T-cell (primary cell): ENCODE measurements at regions of chr13 and their contacts with region 1.

Region 1: GRCh38 chr13:41931337-41931736 is 29.6 kb downstream of the VWA8 start:
- DNase-seq: no peak
- ATAC-seq: no peak
- H3K4me3 ChIP-seq: no peak overlapping the region
- H3K4me3 Mint-ChIP-seq: no peak overlapping the region
- H3K27ac ChIP-seq: no peak overlapping the region
- H3K27ac Mint-ChIP-seq: no peak overlapping the region
- H3K4me1 ChIP-seq: no peaks in the 10 kb centered on the region
- H3K4me1 Mint-ChIP-seq: peaks cover 37 to 40% (median 38%) of the 10 kb centered on the region in 3 donors
- H3K27me3 ChIP-seq: no peaks in the 10 kb centered on the region
- H3K27me3 Mint-ChIP-seq: no peaks in the 10 kb centered on the region

Region 2: GRCh38 chr13:42078128-42078808 is 146.9 kb after region 1 on chr13:
- CTCF ChIA-PET with region 1: no interaction called
- POLR2A ChIA-PET with region 1: interaction called in 1 of 2 experiments, 16 read pairs
- DNase-seq: no peak
- ATAC-seq: no peak
- H3K4me3 ChIP-seq: no peak overlapping the region
- H3K4me3 Mint-ChIP-seq: no peak overlapping the region
- H3K27ac ChIP-seq: no peak overlapping the region
- H3K27ac Mint-ChIP-seq: no peak overlapping the region
- H3K4me1 ChIP-seq: peaks cover 0 to 5% of the 10 kb centered on the region in 2 experiments
- H3K4me1 Mint-ChIP-seq: peaks cover 11 to 26% (median 12%) of the 10 kb centered on the region in 3 donors
- H3K27me3 ChIP-seq: no peaks in the 10 kb centered on the region
- H3K27me3 Mint-ChIP-seq: no peaks in the 10 kb centered on the region